ENCODE measurements at regions of chr6 and their contacts with region 1.

Region 1: DNA sequence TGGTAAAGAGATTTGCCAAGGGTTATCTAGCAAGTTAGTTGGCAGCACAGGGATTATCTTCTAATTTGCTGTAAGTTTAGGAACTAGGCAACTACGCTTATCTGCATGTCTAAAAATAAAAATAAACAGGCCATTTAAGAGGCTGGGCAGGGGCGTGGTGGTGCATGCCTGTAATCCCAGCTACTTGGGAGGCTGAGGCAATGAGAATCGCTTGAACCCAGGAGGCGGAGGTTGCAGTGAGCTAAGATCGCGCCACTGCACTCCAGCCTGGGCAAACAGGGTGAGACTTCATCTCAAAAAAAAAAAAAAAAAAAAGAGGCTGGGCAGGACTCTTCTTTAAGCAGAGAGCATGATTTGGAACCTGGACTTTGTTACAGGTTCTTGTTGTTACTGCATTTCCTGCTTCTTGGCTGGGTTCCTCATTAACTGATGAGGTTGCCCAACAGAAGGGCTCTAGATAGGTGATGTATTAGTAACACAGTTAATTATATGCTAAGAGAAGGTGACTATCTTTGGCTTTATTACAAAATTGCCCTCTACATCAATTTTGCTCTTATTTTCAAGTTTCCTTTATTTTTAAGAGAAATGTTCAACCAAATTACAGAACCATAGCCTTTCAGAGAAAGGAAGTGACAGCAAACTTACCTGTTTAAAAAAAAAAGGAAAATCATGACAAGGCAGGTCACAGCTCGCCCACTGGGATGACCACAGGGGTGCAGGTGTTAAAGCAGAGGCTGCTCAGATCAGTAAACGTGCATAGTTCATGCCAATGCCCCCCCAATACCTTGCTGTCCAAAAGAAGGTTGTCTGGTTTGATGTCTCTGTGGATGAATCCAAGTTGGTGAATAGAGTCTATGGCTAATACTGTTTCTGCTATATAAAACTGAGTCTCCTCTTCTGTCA is 32.5 kb downstream of the STK38 start:
- DNase-seq: peak; percentile 52
- ATAC-seq: peak; percentile 70
- H3K4me3 Mint-ChIP-seq: no peak overlapping the region
- H3K27ac Mint-ChIP-seq: peak overlapping the region; percentile 58
- H3K4me1 Mint-ChIP-seq: peaks cover 47% of the 10 kb centered on the region
- H3K27me3 Mint-ChIP-seq: no peaks in the 10 kb centered on the region
- CTCF ChIP-seq: no peak

Region 2: DNA sequence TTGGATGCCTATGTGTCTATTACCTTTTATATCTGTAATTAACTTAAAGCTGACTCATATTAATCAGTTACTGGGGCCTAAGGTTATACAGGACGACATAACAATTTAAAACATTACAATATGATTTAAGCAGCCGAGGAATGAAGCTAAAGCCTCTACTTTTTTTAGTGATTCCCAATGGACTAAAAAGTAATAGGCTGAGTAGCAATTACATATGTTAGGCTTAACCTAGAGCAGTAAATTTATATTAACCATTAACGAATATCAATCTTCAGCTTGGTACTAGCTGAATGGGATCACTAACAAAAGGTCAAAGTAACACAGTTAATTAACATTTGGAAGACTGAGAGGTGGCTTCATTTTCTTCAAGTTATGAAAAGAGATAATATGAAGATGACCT is 10.6 kb before region 1 on chr6:
- CTCF ChIA-PET with region 1: interaction called, 11 read pairs
- POLR2A ChIA-PET with region 1: interaction called, 5 read pairs
- intact Hi-C with region 1: no loop called
- DNase-seq: no peak
- ATAC-seq: no peak
- H3K4me3 Mint-ChIP-seq: no peak overlapping the region
- H3K27ac Mint-ChIP-seq: peak overlapping the region; percentile 18
- H3K4me1 Mint-ChIP-seq: peaks cover 25% of the 10 kb centered on the region
- H3K27me3 Mint-ChIP-seq: no peaks in the 10 kb centered on the region
- CTCF ChIP-seq: no peak

Region 3: GRCh38 chr6:36570264-36570663 is 55.5 kb after region 1 on chr6:
- CTCF ChIA-PET with region 1: no interaction called
- POLR2A ChIA-PET with region 1: no interaction called
- intact Hi-C with region 1: no loop called
- DNase-seq: no peak
- ATAC-seq: no peak
- H3K4me3 Mint-ChIP-seq: no peak overlapping the region
- H3K27ac Mint-ChIP-seq: no peak overlapping the region
- H3K4me1 Mint-ChIP-seq: peaks cover 3% of the 10 kb centered on the region
- H3K27me3 Mint-ChIP-seq: no peaks in the 10 kb centered on the region
- CTCF ChIP-seq: no peak

Region 4: GRCh38 chr6:36765594-36766398 is 251.0 kb after region 1 on chr6:
- CTCF ChIA-PET with region 1: no interaction called
- POLR2A ChIA-PET with region 1: no interaction called
- intact Hi-C with region 1: no loop called
- DNase-seq: peak; percentile 90
- ATAC-seq: peak; percentile 88
- H3K4me3 Mint-ChIP-seq: no peak overlapping the region
- H3K27ac Mint-ChIP-seq: no peak overlapping the region
- H3K4me1 Mint-ChIP-seq: peaks cover 31% of the 10 kb centered on the region
- H3K27me3 Mint-ChIP-seq: no peaks in the 10 kb centered on the region
- CTCF ChIP-seq: peak; percentile 87